ENCODE measurements at regions of chr13 and their contacts with region 1.

Region 1: DNA sequence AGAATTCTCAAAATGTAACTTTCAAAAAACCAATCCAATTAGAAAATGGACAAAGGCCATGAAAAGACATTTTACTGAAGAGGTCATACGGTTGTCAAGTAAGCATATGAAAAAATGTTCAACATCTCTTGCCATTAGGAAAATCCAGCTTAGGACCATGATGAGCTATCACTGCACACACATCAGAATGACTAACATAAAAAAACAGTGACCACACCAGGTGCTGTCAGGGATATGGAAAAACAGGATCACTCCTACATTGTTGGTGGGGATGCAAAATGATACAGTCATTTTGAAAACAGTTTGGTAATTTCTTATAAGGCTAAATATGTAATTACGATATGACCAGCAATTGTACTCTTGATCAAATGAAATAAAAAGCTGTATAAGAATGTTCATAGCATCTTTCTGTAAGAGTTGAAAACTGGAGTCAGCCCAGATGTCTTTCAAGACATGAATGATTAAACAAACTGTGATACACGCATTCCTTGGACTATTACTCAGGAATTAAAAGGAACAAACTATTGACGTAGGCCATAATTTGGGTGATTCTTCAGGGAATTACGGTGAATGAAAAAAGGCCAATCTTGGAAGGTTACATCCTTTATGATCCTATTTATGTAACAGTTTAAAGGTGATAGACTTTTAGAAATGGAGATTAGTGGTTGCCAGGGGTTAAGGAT is 26.9 kb upstream of the RCBTB2 start:
- DNase-seq: no peak
- ATAC-seq: no peak
- H3K4me3 ChIP-seq: no peak overlapping the region
- H3K27ac ChIP-seq: no peak overlapping the region
- H3K4me1 ChIP-seq: peaks cover 0 to 46% (median 6%) of the 10 kb centered on the region in 9 donors
- H3K27me3 ChIP-seq: no peaks in the 10 kb centered on the region
- CTCF ChIP-seq: no peak

Region 2: DNA sequence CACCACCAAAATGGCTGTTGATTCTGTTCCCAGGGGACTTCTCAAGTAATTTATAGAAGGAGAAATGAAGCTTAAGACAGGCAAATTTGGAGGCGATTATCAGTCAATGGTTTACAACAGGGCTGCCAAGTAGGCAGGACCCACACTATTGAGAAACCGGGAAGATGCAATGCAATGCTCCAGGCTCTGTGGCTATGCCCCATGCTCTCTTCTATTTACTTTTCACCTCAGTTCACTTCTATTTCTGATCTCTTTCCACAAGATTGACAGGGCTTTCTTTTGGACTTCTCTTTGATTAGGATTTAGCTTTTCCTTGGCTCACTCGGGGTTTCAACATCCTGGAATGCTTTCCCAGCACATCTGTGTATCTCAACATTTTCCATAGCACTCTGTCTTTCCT is 14.2 kb before region 1 on chr13:
- intact Hi-C with region 1: loop called in 1 of 10 experiments (anchors 1 kb)
- DNase-seq: no peak
- ATAC-seq: no peak
- H3K4me3 ChIP-seq: no peak overlapping the region
- H3K27ac ChIP-seq: no peak overlapping the region
- H3K4me1 ChIP-seq: peaks cover 14 to 30% (median 22%) of the 10 kb centered on the region in 9 donors
- H3K27me3 ChIP-seq: no peaks in the 10 kb centered on the region
- CTCF ChIP-seq: no peak

Measured in heart right ventricle (tissue), 16 donors.